Activated T-helper 2 cell treated with anti-CD3 and anti-CD28 coated beads, Interferon-gamma antibody, Interleukin-2, Interleukin-4, amounts not matched to agents 10 μg/mL and 5 μg/mL and 100 μg/mL, durations not matched to agents 14 hours and 24 hours and 36 hours (primary cell): ENCODE measurements at regions of chr12 and their contacts with region 1.

Region 1: DNA sequence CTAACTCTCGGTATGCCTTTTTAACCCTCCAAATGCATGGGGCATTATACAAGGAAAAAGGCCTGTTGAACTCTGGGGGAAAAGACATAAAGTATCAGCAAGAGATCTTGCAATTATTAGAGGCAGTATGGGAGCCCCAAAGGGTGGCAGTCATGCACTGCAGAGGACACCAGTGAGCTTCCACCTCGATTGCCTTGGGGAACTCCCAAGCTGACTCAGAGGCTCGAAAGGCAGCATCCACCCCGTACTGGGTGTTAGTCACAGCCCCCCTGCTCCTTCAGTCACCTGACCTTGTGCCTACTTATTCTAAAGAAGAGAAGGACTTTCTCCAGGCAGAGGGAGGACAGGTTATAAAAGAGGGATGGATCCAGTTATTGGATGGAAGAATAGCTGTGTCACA is 781.4 kb upstream of the TMEM132C start:
- DNase-seq: peak; percentile 14
- H3K4me3 Mint-ChIP-seq: no peak overlapping the region
- H3K27ac Mint-ChIP-seq: no peak overlapping the region
- H3K4me1 Mint-ChIP-seq: peaks cover 10% of the 10 kb centered on the region
- H3K27me3 Mint-ChIP-seq: no peaks in the 10 kb centered on the region

Region 2: DNA sequence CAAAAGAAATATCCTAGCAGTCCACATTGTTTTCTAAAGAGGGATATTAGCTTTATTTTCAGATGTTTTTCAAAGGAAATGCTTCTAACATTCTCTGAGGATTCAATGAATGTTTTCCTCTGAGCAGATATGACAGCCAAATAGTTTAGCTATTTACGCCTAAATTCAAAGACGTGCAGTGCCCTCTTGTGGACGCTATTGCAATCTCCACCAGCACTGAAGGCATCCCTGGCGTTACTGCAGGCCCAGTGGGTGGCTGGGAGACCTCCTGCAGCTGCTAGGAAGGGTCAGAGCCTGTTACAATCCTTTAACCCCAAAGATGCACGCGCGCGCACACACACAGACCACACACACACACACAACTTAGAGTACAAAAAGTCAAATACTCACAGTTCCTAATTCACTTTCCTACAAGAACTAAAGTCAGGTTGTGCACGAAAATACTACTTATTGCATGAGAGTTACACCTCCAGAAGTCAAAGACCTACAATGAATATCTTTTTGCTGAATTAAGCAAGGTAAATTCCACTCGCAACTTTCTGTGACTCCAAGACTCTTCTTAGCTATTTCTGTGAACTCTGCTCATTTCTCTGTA is 192.1 kb after region 1 on chr12:
- intact Hi-C with region 1: loop called (anchors 1 kb)
- DNase-seq: peak; percentile 20
- H3K4me3 Mint-ChIP-seq: no peak overlapping the region
- H3K27ac Mint-ChIP-seq: no peak overlapping the region
- H3K4me1 Mint-ChIP-seq: no peaks in the 10 kb centered on the region
- H3K27me3 Mint-ChIP-seq: no peaks in the 10 kb centered on the region